MCF 10A (cell line): ENCODE measurements at regions of chr10 and their contacts with region 1.

Region 1: GRCh38 chr10:62996925-62997324 is 136.2 kb upstream of the NRBF2 start:
- DNase-seq: no peak
- H3K4me3 Mint-ChIP-seq: no peak overlapping the region
- H3K27ac Mint-ChIP-seq: no peak overlapping the region
- H3K4me1 Mint-ChIP-seq: peaks cover 23% of the 10 kb centered on the region
- H3K27me3 Mint-ChIP-seq: no peaks in the 10 kb centered on the region
- CTCF ChIP-seq: no peak

Region 2: GRCh38 chr10:62916141-62916603 is 80.8 kb before region 1 on chr10:
- CTCF ChIA-PET with region 1: no interaction called
- POLR2A ChIA-PET with region 1: no interaction called
- intact Hi-C with region 1: loop called (anchors 5 kb)
- DNase-seq: peak; percentile 92
- H3K4me3 Mint-ChIP-seq: no peak overlapping the region
- H3K27ac Mint-ChIP-seq: peak overlapping the region; percentile 29
- H3K4me1 Mint-ChIP-seq: peaks cover 20% of the 10 kb centered on the region
- H3K27me3 Mint-ChIP-seq: no peaks in the 10 kb centered on the region
- CTCF ChIP-seq: no peak